ENCODE measurements at regions of chr14 and their contacts with region 1.

Region 1: DNA sequence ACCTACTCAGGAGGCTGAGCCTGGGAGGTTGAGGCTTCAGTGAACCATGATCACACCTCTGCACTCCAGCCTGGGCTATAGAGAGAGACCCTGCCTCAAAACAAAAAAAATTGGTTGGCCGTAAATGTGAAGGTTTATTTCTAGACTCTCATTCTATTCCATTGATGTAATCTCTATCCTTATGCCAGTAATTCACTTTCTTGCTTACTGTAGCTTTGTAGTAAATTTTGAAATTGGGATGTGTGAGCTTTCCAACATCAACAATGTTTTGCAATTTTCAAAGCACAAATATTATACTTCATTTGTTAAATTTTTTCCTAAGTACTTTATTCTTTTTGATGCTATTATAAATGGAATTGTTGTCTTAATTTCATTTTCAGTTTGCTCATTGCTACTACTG is 24.6 kb downstream of the LIN52 start:
- DNase-seq: no peak
- H3K4me3 ChIP-seq: no peak overlapping the region
- H3K27ac ChIP-seq: no peak overlapping the region
- H3K27me3 ChIP-seq: no peaks in the 10 kb centered on the region
- CTCF ChIP-seq: no peak

Region 2: GRCh38 chr14:74558655-74559054 is 449.3 kb after region 1 on chr14:
- intact Hi-C with region 1: loop called in 1 of 2 experiments (anchors 5 kb)
- DNase-seq: no peak
- H3K4me3 ChIP-seq: no peak overlapping the region
- H3K27ac ChIP-seq: no peak overlapping the region
- H3K27me3 ChIP-seq: no peaks in the 10 kb centered on the region
- CTCF ChIP-seq: no peak

Measured in dorsolateral prefrontal cortex (tissue), 120 donors.